ENCODE measurements at regions of chr1 and their contacts with region 1.

Region 1: GRCh38 chr1:56249234-56249633 is 330.1 kb downstream of the PLPP3 start:
- H3K4me3 Mint-ChIP-seq: no peak overlapping the region
- H3K27ac Mint-ChIP-seq: no peak overlapping the region
- H3K4me1 Mint-ChIP-seq: peaks cover 5% of the 10 kb centered on the region
- H3K27me3 Mint-ChIP-seq: no peaks in the 10 kb centered on the region

Region 2: GRCh38 chr1:56045477-56045876 is 203.8 kb before region 1 on chr1:
- intact Hi-C with region 1: no loop called
- H3K4me3 Mint-ChIP-seq: no peak overlapping the region
- H3K27ac Mint-ChIP-seq: no peak overlapping the region
- H3K4me1 Mint-ChIP-seq: peaks cover 7% of the 10 kb centered on the region
- H3K27me3 Mint-ChIP-seq: peaks cover 21% of the 10 kb centered on the region

Region 3: DNA sequence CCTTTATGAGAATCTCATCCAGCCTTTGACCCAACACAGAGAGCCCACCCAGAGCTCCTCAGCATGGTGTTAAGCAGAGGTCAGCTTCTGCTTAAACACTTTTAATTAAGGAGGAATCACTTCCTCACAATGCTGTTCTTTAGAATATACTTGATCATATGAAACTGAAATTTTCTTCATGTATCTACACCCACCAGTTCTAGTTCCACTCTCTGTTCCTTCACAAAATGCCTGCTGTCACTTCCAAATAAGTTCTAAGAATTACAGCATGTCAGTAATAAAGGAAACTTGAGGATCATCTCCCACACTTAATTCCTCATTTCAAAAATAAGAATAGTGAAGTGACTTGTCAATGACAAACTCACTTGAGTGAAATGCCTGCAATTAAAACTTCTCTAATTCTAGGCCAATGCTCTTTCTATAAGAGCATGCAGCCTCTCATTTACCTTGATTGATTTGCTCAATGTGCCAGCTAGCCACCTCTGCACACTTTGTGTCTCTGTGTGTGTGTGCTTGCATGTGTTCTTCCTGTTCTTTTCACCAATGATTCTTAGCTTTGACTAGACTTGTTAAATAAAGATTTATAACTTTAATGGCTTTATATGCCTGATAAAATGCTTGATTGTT is 26.2 kb before region 1 on chr1:
- intact Hi-C with region 1: loop called (anchors 2 kb)
- H3K4me3 Mint-ChIP-seq: no peak overlapping the region
- H3K27ac Mint-ChIP-seq: peak overlapping the region; percentile 41
- H3K4me1 Mint-ChIP-seq: peaks cover 59% of the 10 kb centered on the region
- H3K27me3 Mint-ChIP-seq: peaks cover 5% of the 10 kb centered on the region

Region 4: GRCh38 chr1:56265216-56265615 is 16.0 kb after region 1 on chr1:
- intact Hi-C with region 1: loop called (anchors 2 kb)
- H3K4me3 Mint-ChIP-seq: no peak overlapping the region
- H3K27ac Mint-ChIP-seq: no peak overlapping the region
- H3K4me1 Mint-ChIP-seq: peaks cover 38% of the 10 kb centered on the region
- H3K27me3 Mint-ChIP-seq: peaks cover 30% of the 10 kb centered on the region

Region 5: GRCh38 chr1:56291374-56291919 is 42.2 kb after region 1 on chr1:
- intact Hi-C with region 1: loop called (anchors 10 kb)
- H3K4me3 Mint-ChIP-seq: no peak overlapping the region
- H3K27ac Mint-ChIP-seq: no peak overlapping the region
- H3K4me1 Mint-ChIP-seq: peaks cover 51% of the 10 kb centered on the region
- H3K27me3 Mint-ChIP-seq: peaks cover 17% of the 10 kb centered on the region